ENCODE measurements at regions of chr15 and their contacts with region 1.

Region 1: GRCh38 chr15:58770857-58771620 is at the start of gene MINDY2:
- DNase-seq: peak; percentile 98 to 100 (median 99)
- ATAC-seq: peak; percentile 97 to 98 (median 98)
- H3K4me3 ChIP-seq: peak within 1 kb of the TSS; percentile 79 to 99 (median 93)
- H3K27ac ChIP-seq: peak within 1 kb of the TSS; percentile 90 to 99 (median 98)
- H3K4me1 ChIP-seq: peaks cover 0 to 50% (median 33%) of the 10 kb centered on the region in 12 donors
- H3K27me3 ChIP-seq: no peaks in the 10 kb centered on the region
- CTCF ChIP-seq: peak in 10 of 12 donors; percentile 19 to 55 (median 31)
- POLR2A ChIP-seq: peak in 1 of 2 donors; percentile 98
- total RNA-seq, gene MINDY2: 22.2 to 31.8 (median 26.7) TPM

Region 2: GRCh38 chr15:58331903-58332675 is 438.9 kb before region 1 on chr15:
- intact Hi-C with region 1: loop called in 1 of 10 experiments (anchors 10 kb)
- DNase-seq: peak; percentile 94 to 98 (median 96)
- ATAC-seq: peak; percentile 96 to 98 (median 97)
- H3K4me3 ChIP-seq: peak overlapping the region in 2 of 12 donors; percentile 1 to 14
- H3K27ac ChIP-seq: peak overlapping the region; percentile 79 to 95 (median 90)
- H3K4me1 ChIP-seq: peaks cover 8 to 48% (median 31%) of the 10 kb centered on the region in 12 donors
- H3K27me3 ChIP-seq: no peaks in the 10 kb centered on the region
- CTCF ChIP-seq: no peak
- POLR2A ChIP-seq: peak in 1 of 2 donors; percentile 13

Region 3: DNA sequence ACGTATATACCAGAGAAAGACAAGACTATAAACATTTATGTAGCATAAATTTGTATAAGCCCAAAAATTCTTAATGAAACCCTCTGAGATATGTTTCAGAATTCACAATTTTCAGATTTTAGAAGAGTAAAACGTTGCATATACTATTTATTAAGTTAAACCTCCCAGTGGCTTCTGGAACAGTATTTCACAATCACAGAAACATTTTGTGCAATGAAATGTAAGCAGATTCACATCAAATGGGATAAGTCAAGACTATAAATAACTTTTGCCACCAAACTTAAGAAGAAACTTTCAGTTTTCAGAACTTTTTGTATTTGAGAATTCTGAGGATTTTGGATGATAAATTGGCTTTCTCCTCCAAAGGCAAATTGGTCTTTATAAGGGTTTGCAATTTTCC is 153.3 kb after region 1 on chr15:
- intact Hi-C with region 1: loop called in 1 of 10 experiments (anchors 10 kb)
- DNase-seq: no peak
- ATAC-seq: no peak
- H3K4me3 ChIP-seq: no peak overlapping the region
- H3K27ac ChIP-seq: peak overlapping the region in 2 of 12 donors; percentile 19 to 55
- H3K4me1 ChIP-seq: peaks cover 0 to 25% (median 8%) of the 10 kb centered on the region in 12 donors
- H3K27me3 ChIP-seq: no peaks in the 10 kb centered on the region
- CTCF ChIP-seq: no peak
- POLR2A ChIP-seq: no peak

Region 4: GRCh38 chr15:58933281-58934113 is 162.5 kb after region 1 on chr15 and contains the start of gene SLTM:
- intact Hi-C with region 1: loop called in 4 of 10 experiments (anchors 2 to 10 kb)
- DNase-seq: peak; percentile 94 to 97 (median 95)
- ATAC-seq: peak; percentile 90 to 99 (median 97)
- H3K4me3 ChIP-seq: peak within 1 kb of the TSS; percentile 54 to 99 (median 84)
- H3K27ac ChIP-seq: peak within 1 kb of the TSS; percentile 91 to 100 (median 99)
- H3K4me1 ChIP-seq: peaks cover 2 to 38% (median 26%) of the 10 kb centered on the region in 12 donors
- H3K27me3 ChIP-seq: no peaks in the 10 kb centered on the region
- CTCF ChIP-seq: peak in 8 of 12 donors; percentile 15 to 46 (median 30)
- POLR2A ChIP-seq: peak; percentile 72 to 95
- total RNA-seq, gene SLTM: 42.0 to 68.2 (median 48.1) TPM

Measured in heart left ventricle (tissue), 16 donors.